CD4-positive, alpha-beta memory T cell (primary cell): ENCODE measurements at regions of chr12 and their contacts with region 1.

Region 1: DNA sequence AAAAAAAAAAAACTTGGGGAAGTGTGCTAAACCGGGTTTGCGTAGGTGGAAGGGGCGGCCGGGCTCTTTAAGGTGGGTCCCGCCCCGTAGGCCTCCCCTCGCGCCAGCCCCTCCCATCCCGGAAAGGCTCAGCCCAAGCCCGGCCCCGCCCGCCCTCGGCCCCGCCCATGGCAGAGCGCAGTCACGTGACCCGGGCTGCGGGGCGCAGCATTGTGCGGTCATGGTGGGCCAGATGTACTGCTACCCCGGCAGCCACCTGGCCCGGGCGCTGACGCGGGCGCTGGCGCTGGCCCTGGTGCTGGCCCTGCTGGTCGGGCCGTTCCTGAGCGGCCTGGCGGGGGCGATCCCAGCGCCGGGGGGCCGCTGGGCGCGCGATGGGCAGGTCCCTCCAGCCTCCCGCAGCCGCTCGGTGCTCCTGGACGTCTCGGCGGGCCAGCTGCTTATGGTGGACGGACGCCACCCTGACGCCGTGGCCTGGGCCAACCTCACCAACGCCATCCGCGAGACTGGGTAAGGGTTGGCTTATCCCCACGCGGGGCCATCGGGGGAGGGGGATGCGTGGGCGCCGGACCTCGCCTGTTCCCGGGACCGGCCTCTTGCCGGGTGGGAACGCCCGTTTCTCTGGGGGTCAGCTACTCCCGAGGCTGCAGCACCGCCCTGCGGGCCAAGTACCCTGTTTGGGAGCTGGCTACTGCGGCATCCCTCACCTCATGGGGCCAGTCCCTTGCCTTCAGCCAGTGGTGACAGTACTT is at the start of gene PLBD2:
- DNase-seq: peak; percentile 92 to 95 (median 93)
- H3K4me3 ChIP-seq: peak within 1 kb of the TSS; percentile 63 to 70
- H3K4me3 Mint-ChIP-seq: peak within 1 kb of the TSS; percentile 89 to 94 (median 92)
- H3K27ac ChIP-seq: peak within 1 kb of the TSS; percentile 63
- H3K27ac Mint-ChIP-seq: peak within 1 kb of the TSS; percentile 91 to 98 (median 97)
- H3K4me1 ChIP-seq: peaks cover 19% of the 10 kb centered on the region
- H3K4me1 Mint-ChIP-seq: peaks cover 6 to 24% (median 16%) of the 10 kb centered on the region in 4 donors
- H3K27me3 ChIP-seq: no peaks in the 10 kb centered on the region
- H3K27me3 Mint-ChIP-seq: no peaks in the 10 kb centered on the region
- total RNA-seq, gene PLBD2: 15.6 to 18.4 TPM

Region 2: DNA sequence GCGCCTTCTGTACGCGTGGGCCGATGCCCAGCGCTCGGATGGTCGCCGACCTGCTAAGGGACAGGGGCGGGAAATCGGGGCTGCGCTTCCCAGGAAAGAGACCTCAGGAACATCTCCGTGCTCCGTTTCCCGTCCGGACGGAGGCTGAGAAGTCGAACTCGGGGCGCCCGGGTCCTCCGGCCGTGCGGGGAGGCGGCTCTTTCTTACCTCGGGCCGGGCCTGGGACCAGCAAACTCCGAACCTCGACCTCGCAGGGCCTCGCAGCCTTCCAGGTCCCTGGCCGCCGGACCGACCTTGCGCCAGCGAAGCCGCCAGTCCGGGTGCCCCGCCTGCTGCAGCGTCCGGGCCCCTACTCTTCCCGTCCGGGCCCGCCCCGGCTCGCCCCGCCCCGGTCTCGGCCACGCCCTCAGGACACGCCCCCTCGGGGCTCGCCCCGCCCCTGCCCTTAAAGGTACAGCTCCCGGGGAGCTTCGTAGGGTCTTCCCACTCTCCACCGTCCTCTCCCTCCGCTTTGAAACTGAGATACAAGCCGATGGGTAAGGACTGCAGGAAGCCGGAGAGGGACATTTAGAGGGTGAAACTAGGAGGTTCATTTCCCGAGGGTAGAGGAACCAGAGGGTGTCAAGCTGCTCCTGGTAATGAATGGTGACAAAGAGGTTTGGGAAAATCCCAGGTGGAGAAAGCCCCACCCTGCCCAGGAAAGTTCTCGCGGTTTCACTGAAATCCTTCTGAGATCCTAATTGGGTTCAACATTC is 23.6 kb before region 1 on chr12 and contains the start of gene SLC8B1:
- CTCF ChIA-PET with region 1: interaction called, 4 read pairs
- POLR2A ChIA-PET with region 1: interaction called, 9 read pairs
- intact Hi-C with region 1: loop called (anchors 1 kb)
- DNase-seq: peak; percentile 75 to 85 (median 76)
- H3K4me3 ChIP-seq: peak within 1 kb of the TSS; percentile 69 to 79
- H3K4me3 Mint-ChIP-seq: peak within 1 kb of the TSS; percentile 92 to 99 (median 98)
- H3K27ac ChIP-seq: peak within 1 kb of the TSS; percentile 50
- H3K27ac Mint-ChIP-seq: peak within 1 kb of the TSS; percentile 84 to 96 (median 89)
- H3K4me1 ChIP-seq: peaks cover 21% of the 10 kb centered on the region
- H3K4me1 Mint-ChIP-seq: peaks cover 19 to 52% (median 36%) of the 10 kb centered on the region in 4 donors
- H3K27me3 ChIP-seq: no peaks in the 10 kb centered on the region
- H3K27me3 Mint-ChIP-seq: no peaks in the 10 kb centered on the region
- total RNA-seq, gene SLC8B1: 91.2 to 93.5 TPM

Region 3: DNA sequence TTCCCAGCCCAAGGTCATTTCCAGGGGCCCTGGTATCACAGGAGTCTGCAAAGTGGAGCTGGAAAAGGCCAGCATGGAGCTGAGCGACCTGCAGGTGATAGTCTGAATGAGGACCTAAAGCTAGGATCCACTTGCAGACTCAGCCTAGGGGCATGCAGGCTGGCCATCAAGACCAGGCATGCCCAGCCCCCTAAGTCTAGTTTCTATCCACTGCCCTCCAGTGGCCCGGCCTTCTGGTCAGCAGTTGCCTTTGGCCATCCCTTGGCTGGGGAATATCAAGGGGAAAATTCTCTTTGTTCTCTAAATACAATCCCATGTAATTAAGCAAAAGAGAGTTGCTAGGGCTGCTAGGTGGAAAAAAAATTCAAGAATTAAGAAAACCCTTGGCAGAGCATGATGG is 209.5 kb after region 1 on chr12:
- CTCF ChIA-PET with region 1: no interaction called
- POLR2A ChIA-PET with region 1: no interaction called
- intact Hi-C with region 1: no loop called
- DNase-seq: no peak
- H3K4me3 ChIP-seq: no peak overlapping the region
- H3K4me3 Mint-ChIP-seq: no peak overlapping the region
- H3K27ac ChIP-seq: no peak overlapping the region
- H3K27ac Mint-ChIP-seq: no peak overlapping the region
- H3K4me1 ChIP-seq: no peaks in the 10 kb centered on the region
- H3K4me1 Mint-ChIP-seq: no peaks in the 10 kb centered on the region
- H3K27me3 ChIP-seq: no peaks in the 10 kb centered on the region
- H3K27me3 Mint-ChIP-seq: peaks cover 15 to 16% of the 10 kb centered on the region in 2 donors